Gastrocnemius medialis (tissue), 4 donors: ENCODE measurements at regions of chr2 and their contacts with region 1.

Region 1: DNA sequence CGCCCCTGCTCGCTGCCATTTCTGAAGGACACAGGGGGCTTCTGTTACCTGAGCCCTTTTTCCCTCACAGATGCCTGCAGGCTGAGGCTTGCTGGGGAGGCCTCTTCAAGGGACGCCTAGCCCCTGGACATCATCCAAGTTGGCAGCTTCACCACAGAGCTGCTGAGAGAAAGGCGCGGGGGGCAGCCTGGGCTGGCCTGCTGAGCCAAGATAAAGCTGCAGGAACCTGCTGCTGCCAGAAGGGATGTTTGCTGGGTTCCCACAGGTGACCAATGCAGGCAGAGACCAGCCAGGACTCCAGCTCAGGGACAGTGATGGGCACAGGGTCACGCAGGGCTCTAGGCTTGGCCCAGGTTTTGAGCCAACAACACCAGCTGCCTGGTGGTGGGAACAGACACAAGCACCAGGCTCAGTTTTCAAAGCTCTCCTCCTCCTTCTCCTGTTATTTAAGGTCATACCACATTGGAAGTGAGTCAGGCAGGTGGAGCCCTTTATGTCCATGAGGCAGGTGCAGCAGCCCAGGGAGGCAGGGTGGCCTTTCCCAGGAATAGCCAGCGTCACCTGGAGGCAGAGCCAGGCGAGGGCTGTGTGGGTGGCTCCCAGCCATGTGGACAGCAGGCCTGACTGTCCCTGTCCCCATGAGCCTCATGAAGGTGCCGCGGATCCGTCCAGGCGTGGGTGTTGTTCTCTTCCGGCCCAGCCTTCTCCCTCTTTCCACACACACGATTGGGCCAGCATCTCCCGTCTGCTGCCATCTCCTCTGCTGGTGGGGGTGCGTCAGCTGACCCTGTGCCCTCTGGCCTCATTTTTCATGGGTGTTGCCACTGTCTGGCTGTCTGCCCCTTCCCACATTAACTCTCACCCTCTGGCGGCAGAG is 515.5 kb upstream of the MYT1L start:
- DNase-seq: peak; percentile 86 to 95
- ATAC-seq: peak; percentile 83 to 88
- H3K4me3 ChIP-seq: peak overlapping the region in 1 of 4 donors; percentile 32
- H3K27ac ChIP-seq: peak overlapping the region; percentile 88 to 93 (median 92)
- H3K4me1 ChIP-seq: peaks cover 20 to 21% of the 10 kb centered on the region in 2 donors
- H3K27me3 ChIP-seq: no peaks in the 10 kb centered on the region
- CTCF ChIP-seq: peak in 1 of 5 experiments; percentile 17
- POLR2A ChIP-seq: peak in 1 of 2 donors; percentile 29

Region 2: GRCh38 chr2:2664989-2665835 is 181.4 kb before region 1 on chr2:
- in situ Hi-C with region 1: no loop called
- intact Hi-C with region 1: loop called (anchors 5 kb)
- DNase-seq: peak in 1 of 2 donors; percentile 28
- ATAC-seq: no peak
- H3K4me3 ChIP-seq: no peak overlapping the region
- H3K27ac ChIP-seq: no peak overlapping the region
- H3K4me1 ChIP-seq: peaks cover 19 to 27% of the 10 kb centered on the region in 2 donors
- H3K27me3 ChIP-seq: no peaks in the 10 kb centered on the region
- CTCF ChIP-seq: no peak
- POLR2A ChIP-seq: no peak

Region 3: GRCh38 chr2:2769481-2770431 is 76.8 kb before region 1 on chr2:
- in situ Hi-C with region 1: no loop called
- intact Hi-C with region 1: loop called (anchors 1 kb)
- DNase-seq: peak; percentile 89 to 95
- ATAC-seq: peak; percentile 99 to 100
- H3K4me3 ChIP-seq: peak overlapping the region in 3 of 4 donors; percentile 9 to 38 (median 13)
- H3K27ac ChIP-seq: peak overlapping the region; percentile 82 to 94 (median 87)
- H3K4me1 ChIP-seq: peaks cover 12 to 16% of the 10 kb centered on the region in 2 donors
- H3K27me3 ChIP-seq: no peaks in the 10 kb centered on the region
- CTCF ChIP-seq: peak; percentile 35 to 66 (median 59)
- POLR2A ChIP-seq: peak; percentile 35 to 55

Region 4: DNA sequence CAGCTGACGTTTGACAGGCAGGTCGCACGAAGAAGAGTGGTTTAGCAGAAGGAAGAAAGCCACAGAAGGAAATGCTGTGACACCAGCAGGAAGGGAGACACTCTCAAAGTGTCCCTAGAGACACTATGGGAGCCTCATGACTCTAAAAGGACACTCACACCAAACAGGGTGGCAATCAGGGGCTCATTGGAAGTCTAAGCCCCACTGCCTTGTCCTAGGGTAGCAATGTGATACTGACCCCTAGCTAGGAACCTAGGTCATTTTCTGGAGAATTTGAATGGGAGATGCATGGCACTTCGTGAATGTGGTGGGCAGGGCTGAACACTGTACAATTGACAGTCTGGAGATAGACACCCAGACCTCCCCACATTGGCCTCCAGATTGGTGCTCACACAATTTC is 146.1 kb after region 1 on chr2:
- in situ Hi-C with region 1: no loop called
- intact Hi-C with region 1: no loop called
- DNase-seq: no peak
- ATAC-seq: no peak
- H3K4me3 ChIP-seq: no peak overlapping the region
- H3K27ac ChIP-seq: no peak overlapping the region
- H3K4me1 ChIP-seq: no peaks in the 10 kb centered on the region
- H3K27me3 ChIP-seq: no peaks in the 10 kb centered on the region
- CTCF ChIP-seq: no peak
- POLR2A ChIP-seq: no peak

Region 5: GRCh38 chr2:3114406-3115185 is 268.0 kb after region 1 on chr2:
- in situ Hi-C with region 1: no loop called
- intact Hi-C with region 1: no loop called
- DNase-seq: no peak
- ATAC-seq: no peak
- H3K4me3 ChIP-seq: no peak overlapping the region
- H3K27ac ChIP-seq: no peak overlapping the region
- H3K4me1 ChIP-seq: no peaks in the 10 kb centered on the region
- H3K27me3 ChIP-seq: no peaks in the 10 kb centered on the region
- CTCF ChIP-seq: no peak
- POLR2A ChIP-seq: no peak

Region 6: GRCh38 chr2:3470166-3470651 is 623.6 kb after region 1 on chr2:
- in situ Hi-C with region 1: no loop called
- intact Hi-C with region 1: loop called (anchors 10 kb)
- DNase-seq: peak; percentile 93 to 94
- ATAC-seq: peak; percentile 73 to 76
- H3K4me3 ChIP-seq: peak overlapping the region in 3 of 4 donors; percentile 10 to 37 (median 26)
- H3K27ac ChIP-seq: peak overlapping the region; percentile 87 to 99 (median 92)
- H3K4me1 ChIP-seq: peaks cover 36 to 63% of the 10 kb centered on the region in 2 donors
- H3K27me3 ChIP-seq: no peaks in the 10 kb centered on the region
- CTCF ChIP-seq: no peak
- POLR2A ChIP-seq: peak; percentile 17 to 46